Mammary epithelial cell (primary cell): ENCODE measurements at regions of chr19 and their contacts with region 1.

Region 1: GRCh38 chr19:18521885-18522624 is at the start of gene ELL:
- DNase-seq: peak; percentile 100
- H3K4me3 ChIP-seq: peak within 1 kb of the TSS; percentile 69 to 97 (median 96)
- H3K27ac ChIP-seq: peak within 1 kb of the TSS; percentile 92
- H3K4me1 ChIP-seq: peaks cover 24% of the 10 kb centered on the region
- H3K27me3 ChIP-seq: no peaks in the 10 kb centered on the region
- CTCF ChIP-seq: peak in 1 of 2 donors; percentile 26
- total RNA-seq, gene ELL: 17.3 to 27.7 TPM

Region 2: DNA sequence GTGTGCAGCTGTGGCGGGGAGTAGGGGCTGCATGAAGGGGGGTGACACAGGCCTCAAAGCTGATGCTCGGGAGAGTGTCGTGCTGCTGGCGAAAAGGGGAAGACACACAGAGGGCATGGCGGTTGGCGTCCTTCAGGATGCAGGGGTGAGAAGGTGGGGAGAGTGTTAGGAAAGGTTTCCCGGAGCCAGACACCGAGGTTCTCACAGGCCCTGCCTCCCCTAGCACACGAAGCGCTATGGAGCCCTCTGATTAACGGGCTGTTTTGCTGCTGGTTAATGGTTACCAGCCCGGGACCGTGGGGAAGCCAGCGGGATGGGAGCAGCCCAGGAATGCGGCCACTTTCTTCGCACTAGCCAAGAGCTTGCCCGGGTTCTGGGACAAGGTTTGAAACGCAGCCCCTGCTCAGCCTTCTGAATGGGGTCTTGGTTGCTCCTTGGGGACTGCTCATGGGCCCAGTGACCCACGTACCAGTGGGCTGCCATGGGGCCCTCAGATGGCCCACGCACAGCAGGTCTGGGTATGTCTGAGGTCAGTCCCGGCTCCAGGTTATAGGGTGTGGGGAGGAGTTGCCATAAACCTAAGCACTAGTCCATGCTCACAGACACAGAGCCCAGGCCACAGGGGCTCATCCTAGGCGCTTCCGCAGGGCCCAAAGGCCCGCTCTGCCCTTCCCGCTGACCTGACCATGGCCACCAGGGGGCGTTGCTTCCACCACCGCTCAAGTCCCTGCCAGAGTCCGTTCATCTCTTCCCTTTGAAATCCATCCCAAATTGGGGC is 52.8 kb before region 1 on chr19:
- CTCF ChIA-PET with region 1: no interaction called
- dilution Hi-C with region 1: loop called (anchors 5 kb)
- in situ Hi-C with region 1: no loop called
- intact Hi-C with region 1: loop called (anchors 5 kb)
- DNase-seq: no peak
- H3K4me3 ChIP-seq: no peak overlapping the region
- H3K27ac ChIP-seq: no peak overlapping the region
- H3K4me1 ChIP-seq: peaks cover 8% of the 10 kb centered on the region
- H3K27me3 ChIP-seq: no peaks in the 10 kb centered on the region
- CTCF ChIP-seq: peak; percentile 68 to 83

Region 3: GRCh38 chr19:18496167-18496979 is 25.7 kb before region 1 on chr19:
- CTCF ChIA-PET with region 1: interaction called, 23 read pairs
- dilution Hi-C with region 1: no loop called
- in situ Hi-C with region 1: no loop called
- intact Hi-C with region 1: loop called (anchors 2 kb)
- DNase-seq: peak; percentile 90
- H3K4me3 ChIP-seq: no peak overlapping the region
- H3K27ac ChIP-seq: peak overlapping the region; percentile 36
- H3K4me1 ChIP-seq: peaks cover 29% of the 10 kb centered on the region
- H3K27me3 ChIP-seq: no peaks in the 10 kb centered on the region
- CTCF ChIP-seq: peak in 1 of 2 donors; percentile 38

Region 4: GRCh38 chr19:18557474-18558201 is 35.6 kb after region 1 on chr19 and contains the start of gene KXD1:
- CTCF ChIA-PET with region 1: interaction called, 3 read pairs
- dilution Hi-C with region 1: no loop called
- in situ Hi-C with region 1: no loop called
- intact Hi-C with region 1: loop called (anchors 1 kb)
- DNase-seq: peak; percentile 94
- H3K4me3 ChIP-seq: peak within 1 kb of the TSS; percentile 69 to 83 (median 81)
- H3K27ac ChIP-seq: peak within 1 kb of the TSS; percentile 73
- H3K4me1 ChIP-seq: no peaks in the 10 kb centered on the region
- H3K27me3 ChIP-seq: no peaks in the 10 kb centered on the region
- CTCF ChIP-seq: no peak
- total RNA-seq, gene KXD1: 83.9 to 98.2 TPM

Region 5: DNA sequence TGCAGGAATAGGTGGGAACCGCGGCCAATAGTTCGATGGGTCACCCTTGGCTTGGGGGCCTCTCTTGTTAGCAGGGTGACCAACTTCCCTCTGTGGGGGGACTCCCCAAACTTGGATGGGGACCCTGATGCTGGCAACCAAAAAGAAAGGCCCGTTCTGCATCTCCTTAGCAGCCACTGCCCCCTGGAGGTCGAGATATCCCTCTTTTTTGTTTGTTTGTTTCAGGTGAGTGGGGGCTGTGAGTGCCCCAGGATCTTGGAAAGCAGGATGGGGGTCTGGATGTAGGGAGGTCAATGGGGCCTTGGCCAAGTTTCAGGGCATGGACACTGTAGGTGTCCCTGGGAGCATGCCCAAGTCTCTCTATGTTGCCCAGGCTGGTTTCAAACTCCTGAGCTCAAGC is 153.7 kb after region 1 on chr19:
- CTCF ChIA-PET with region 1: no interaction called
- dilution Hi-C with region 1: no loop called
- in situ Hi-C with region 1: no loop called
- intact Hi-C with region 1: loop called (anchors 5 kb)
- DNase-seq: no peak
- H3K4me3 ChIP-seq: no peak overlapping the region
- H3K27ac ChIP-seq: no peak overlapping the region
- H3K4me1 ChIP-seq: peaks cover 19% of the 10 kb centered on the region
- H3K27me3 ChIP-seq: no peaks in the 10 kb centered on the region
- CTCF ChIP-seq: peak; percentile 23 to 54